ENCODE measurements at regions of chr4 and their contacts with region 1.

Region 1: GRCh38 chr4:8428293-8429097 is 12.0 kb downstream of the ACOX3 start:
- DNase-seq: peak; percentile 94
- H3K4me3 Mint-ChIP-seq: peak overlapping the region; percentile 97
- H3K27ac Mint-ChIP-seq: peak overlapping the region; percentile 89
- H3K4me1 Mint-ChIP-seq: peaks cover 27% of the 10 kb centered on the region
- H3K27me3 Mint-ChIP-seq: no peaks in the 10 kb centered on the region

Region 2: DNA sequence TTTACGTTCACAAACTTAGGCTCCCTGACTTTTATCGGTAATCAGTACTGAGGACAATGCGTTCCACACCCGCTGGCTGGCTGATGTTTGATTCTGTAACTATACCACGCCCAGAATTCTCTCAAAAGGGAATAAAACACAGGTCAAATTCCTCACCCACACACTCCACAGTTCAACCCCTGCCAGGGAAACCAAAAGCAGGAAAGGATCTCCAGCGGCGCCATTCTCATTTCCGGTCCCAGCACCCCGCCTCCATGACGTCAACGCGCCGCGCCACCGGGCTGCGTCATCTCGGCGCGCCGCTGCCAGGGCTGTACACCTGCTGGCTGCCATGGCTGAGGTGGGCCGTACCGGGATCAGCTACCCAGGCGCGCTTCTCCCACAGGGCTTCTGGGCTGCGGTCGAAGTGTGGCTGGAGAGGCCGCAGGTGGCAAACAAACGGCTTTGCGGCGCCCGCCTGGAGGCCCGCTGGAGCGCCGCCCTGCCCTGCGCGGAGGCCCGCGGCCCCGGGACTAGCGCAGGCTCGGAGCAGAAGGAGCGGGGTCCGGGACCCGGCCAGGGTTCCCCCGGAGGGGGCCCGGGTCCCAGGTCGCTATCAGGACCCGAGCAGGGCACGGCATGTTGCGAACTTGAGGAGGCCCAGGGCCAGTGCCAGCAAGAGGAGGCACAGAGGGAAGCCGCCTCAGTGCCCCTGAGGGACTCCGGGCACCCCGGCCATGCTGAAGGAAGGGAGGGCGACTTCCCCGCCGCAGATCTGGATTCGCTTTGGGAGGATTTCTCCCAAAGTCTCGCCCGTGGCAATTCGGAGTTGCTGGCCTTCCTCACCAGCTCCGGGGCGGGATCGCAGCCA is 12.2 kb after region 1 on chr4 and contains the starts of genes ACOX3 and TRMT44:
- CTCF ChIA-PET with region 1: interaction called, 11 read pairs
- POLR2A ChIA-PET with region 1: interaction called, 12 read pairs
- intact Hi-C with region 1: loop called (anchors 1 kb)
- DNase-seq: peak; percentile 97
- H3K4me3 Mint-ChIP-seq: peak within 1 kb of the TSS; percentile 95
- H3K27ac Mint-ChIP-seq: peak within 1 kb of the TSS; percentile 99
- H3K4me1 Mint-ChIP-seq: peaks cover 73% of the 10 kb centered on the region
- H3K27me3 Mint-ChIP-seq: no peaks in the 10 kb centered on the region
- total RNA-seq, gene ACOX3: 42.3 to 45.8 TPM
- total RNA-seq, gene TRMT44: 24.1 to 29.2 TPM

Measured in activated CD4-positive, alpha-beta memory T cell treated with anti-CD3 and anti-CD28 coated beads for 36 hours (primary cell).